ENCODE measurements at regions of chr15 and their contacts with region 1.

Region 1: GRCh38 chr15:29656636-29657475 is 165.4 kb downstream of the TJP1 start:
- DNase-seq: no peak
- ATAC-seq: peak; percentile 96
- H3K4me3 ChIP-seq: peak overlapping the region; percentile 23 to 49
- H3K27ac ChIP-seq: no peak overlapping the region
- H3K4me1 ChIP-seq: no peaks in the 10 kb centered on the region
- H3K27me3 ChIP-seq: no peaks in the 10 kb centered on the region
- CTCF ChIP-seq: peak; percentile 56; the same call in 1 of the 2 replicates

Region 2: GRCh38 chr15:29613951-29614382 is 42.9 kb before region 1 on chr15:
- CTCF ChIA-PET with region 1: interaction called, 10 read pairs
- POLR2A ChIA-PET with region 1: no interaction called
- in situ Hi-C with region 1: no loop called
- intact Hi-C with region 1: no loop called
- DNase-seq: no peak
- ATAC-seq: peak; percentile 96
- H3K4me3 ChIP-seq: no peak overlapping the region
- H3K27ac ChIP-seq: no peak overlapping the region
- H3K4me1 ChIP-seq: no peaks in the 10 kb centered on the region
- H3K27me3 ChIP-seq: peaks cover 5% of the 10 kb centered on the region; the same call in 1 of the 2 replicates
- CTCF ChIP-seq: peak; percentile 89

Region 3: DNA sequence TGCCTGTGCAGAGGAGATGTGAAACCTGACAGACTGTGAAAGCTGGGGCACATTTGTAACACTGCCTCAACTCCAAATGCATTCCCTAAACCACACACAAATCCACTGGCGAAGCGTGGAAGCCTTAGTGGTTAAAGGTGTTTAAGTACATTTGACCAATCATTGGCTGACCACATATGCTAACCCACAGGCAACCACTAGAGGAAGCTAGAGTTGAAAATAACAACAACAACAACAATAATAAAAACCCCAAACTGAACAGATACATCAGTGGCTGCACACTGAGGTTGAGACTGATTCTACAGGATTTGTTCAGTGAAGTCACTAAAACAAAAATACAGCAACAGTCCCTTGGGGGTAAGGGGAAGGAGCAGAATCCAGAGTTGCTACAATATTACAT is 35.7 kb after region 1 on chr15:
- CTCF ChIA-PET with region 1: no interaction called
- POLR2A ChIA-PET with region 1: no interaction called
- in situ Hi-C with region 1: no loop called
- intact Hi-C with region 1: no loop called
- DNase-seq: no peak
- ATAC-seq: no peak
- H3K4me3 ChIP-seq: no peak overlapping the region
- H3K27ac ChIP-seq: no peak overlapping the region
- H3K4me1 ChIP-seq: no peaks in the 10 kb centered on the region
- H3K27me3 ChIP-seq: no peaks in the 10 kb centered on the region
- CTCF ChIP-seq: peak; percentile 46; the same call in 1 of the 2 replicates